CD14-positive monocyte (primary cell): ENCODE measurements at regions of chr22 and their contacts with region 1.

Region 1: GRCh38 chr22:23786752-23787599 is at the start of gene SMARCB1:
- DNase-seq: peak; percentile 84 to 87 (median 85)
- H3K4me3 ChIP-seq: peak within 1 kb of the TSS; percentile 46 to 80 (median 77)
- H3K4me3 Mint-ChIP-seq: peak within 1 kb of the TSS; percentile 81 to 91
- H3K27ac ChIP-seq: peak within 1 kb of the TSS; percentile 89 to 93
- H3K27ac Mint-ChIP-seq: peak within 1 kb of the TSS; percentile 82 to 94 (median 87)
- H3K4me1 ChIP-seq: peaks cover 14 to 19% of the 10 kb centered on the region in 2 donors
- H3K4me1 Mint-ChIP-seq: peaks cover 15% of the 10 kb centered on the region
- H3K27me3 ChIP-seq: no peaks in the 10 kb centered on the region
- H3K27me3 Mint-ChIP-seq: peaks cover 0 to 3% (median 1%) of the 10 kb centered on the region in 3 donors
- CTCF ChIP-seq: no peak
- polyA plus RNA-seq, gene SMARCB1: 30.3 to 71.8 (median 31.5) TPM

Region 2: GRCh38 chr22:23838681-23839468 is 51.9 kb after region 1 on chr22 and contains the start of gene DERL3:
- intact Hi-C with region 1: loop called (anchors 2 kb)
- DNase-seq: peak; percentile 99 to 100 (median 100)
- H3K4me3 ChIP-seq: peak within 1 kb of the TSS; percentile 36 to 73 (median 49)
- H3K4me3 Mint-ChIP-seq: peak within 1 kb of the TSS; percentile 83 to 88
- H3K27ac ChIP-seq: peak within 1 kb of the TSS in 1 of 2 donors; percentile 53
- H3K27ac Mint-ChIP-seq: peak within 1 kb of the TSS; percentile 72 to 94 (median 85)
- H3K4me1 ChIP-seq: peaks cover 16 to 17% of the 10 kb centered on the region in 2 donors
- H3K4me1 Mint-ChIP-seq: peaks cover 20% of the 10 kb centered on the region
- H3K27me3 ChIP-seq: no peaks in the 10 kb centered on the region
- H3K27me3 Mint-ChIP-seq: peaks cover 3 to 8% (median 4%) of the 10 kb centered on the region in 3 donors
- CTCF ChIP-seq: no peak
- polyA plus RNA-seq, gene DERL3: 0.23 to 0.64 (median 0.28) TPM

Region 3: DNA sequence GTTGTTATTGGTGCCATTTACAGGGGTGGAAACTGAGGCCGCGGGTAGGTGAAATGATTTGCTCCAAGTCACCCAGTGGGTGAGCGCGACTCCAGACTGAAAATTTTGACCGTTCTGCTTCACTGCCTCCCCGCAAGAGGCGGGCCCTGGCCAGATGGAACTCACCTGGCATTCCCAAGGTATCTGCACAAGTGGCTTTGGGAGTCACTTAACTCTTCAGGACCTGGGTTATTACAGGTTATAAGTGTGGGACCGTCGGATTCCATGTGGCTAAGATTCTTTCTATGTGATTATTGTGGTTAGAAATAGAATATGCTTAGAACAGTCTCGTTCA is 224.7 kb after region 1 on chr22:
- intact Hi-C with region 1: loop called in 1 of 2 experiments (anchors 5 kb)
- DNase-seq: no peak
- H3K4me3 ChIP-seq: peak overlapping the region; percentile 73 to 97 (median 88)
- H3K4me3 Mint-ChIP-seq: peak overlapping the region; percentile 93 to 98
- H3K27ac ChIP-seq: peak overlapping the region; percentile 51 to 82
- H3K27ac Mint-ChIP-seq: peak overlapping the region; percentile 72 to 94 (median 89)
- H3K4me1 ChIP-seq: peaks cover 11 to 12% of the 10 kb centered on the region in 2 donors
- H3K4me1 Mint-ChIP-seq: peaks cover 14% of the 10 kb centered on the region
- H3K27me3 ChIP-seq: no peaks in the 10 kb centered on the region
- H3K27me3 Mint-ChIP-seq: peaks cover 0 to 1% (median 0%) of the 10 kb centered on the region in 3 donors
- CTCF ChIP-seq: no peak